Naive thymus-derived CD8-positive, alpha-beta T cell (primary cell): ENCODE measurements at regions of chr18 and their contacts with region 1.

Region 1: DNA sequence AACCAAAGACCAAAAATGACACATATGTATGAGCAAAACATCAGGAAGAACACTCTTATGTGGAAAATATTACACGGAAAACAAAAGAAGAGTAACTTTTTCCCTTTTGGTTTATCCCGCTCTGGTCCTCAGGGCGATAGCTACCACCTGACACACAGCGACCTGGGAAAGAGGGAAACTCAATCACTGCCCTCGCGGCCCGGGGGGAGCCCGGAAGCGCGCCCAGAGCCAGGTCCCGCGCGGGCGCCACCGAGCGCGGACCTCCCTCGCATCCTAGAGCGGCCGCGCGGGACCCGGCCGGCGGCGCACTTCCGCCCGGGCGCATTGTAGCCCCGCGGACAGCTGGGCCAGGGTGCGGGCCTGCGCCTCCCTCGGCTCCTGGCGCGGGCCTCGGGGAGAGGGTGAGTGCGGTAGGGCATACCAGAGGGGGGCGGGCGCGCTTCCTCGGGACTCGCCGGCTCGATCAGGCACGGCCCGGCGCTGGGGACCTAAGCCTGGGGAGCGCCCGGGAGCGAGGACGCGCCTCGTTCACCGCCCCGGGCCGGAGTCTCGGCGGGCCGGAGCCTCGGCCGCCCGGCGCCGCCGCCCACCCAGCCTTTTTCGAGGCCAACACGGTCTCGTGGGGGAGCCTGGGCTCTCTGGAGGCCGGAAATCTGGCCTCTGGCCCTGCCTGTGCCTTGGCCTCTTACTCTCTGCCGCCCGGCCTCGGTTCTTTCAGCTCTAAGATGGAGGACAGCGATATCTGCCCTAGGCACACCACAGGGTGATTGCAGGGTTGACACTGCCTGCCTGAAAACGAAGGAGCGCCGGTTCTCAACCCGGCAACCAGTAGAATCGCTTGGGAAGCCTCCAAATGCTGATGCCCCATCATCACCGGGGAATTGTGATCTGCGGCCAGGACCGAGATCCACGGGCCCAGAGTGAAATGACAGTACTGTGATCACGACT is at the start of gene ELAC1:
- DNase-seq: peak; percentile 32 to 75 (median 62)
- ATAC-seq: peak; percentile 87 to 89
- H3K4me3 Mint-ChIP-seq: peak within 1 kb of the TSS; percentile 72 to 97 (median 94)
- H3K27ac Mint-ChIP-seq: peak within 1 kb of the TSS; percentile 61 to 98 (median 96)
- H3K4me1 Mint-ChIP-seq: peaks cover 16 to 32% (median 25%) of the 10 kb centered on the region in 4 donors
- H3K27me3 Mint-ChIP-seq: no peaks in the 10 kb centered on the region
- polyA plus RNA-seq, gene ELAC1: 12.6 to 19.9 (median 15.0) TPM

Region 2: GRCh38 chr18:50878345-50879301 is 89.4 kb before region 1 on chr18 and contains the start of gene ME2:
- POLR2A ChIA-PET with region 1: interaction called, 47 read pairs
- DNase-seq: peak; percentile 77 to 94 (median 88)
- ATAC-seq: peak; percentile 88 to 90
- H3K4me3 Mint-ChIP-seq: peak within 1 kb of the TSS; percentile 91 to 99 (median 98)
- H3K27ac Mint-ChIP-seq: peak within 1 kb of the TSS; percentile 95 to 99 (median 98)
- H3K4me1 Mint-ChIP-seq: peaks cover 14 to 38% (median 32%) of the 10 kb centered on the region in 4 donors
- H3K27me3 Mint-ChIP-seq: peaks cover 0 to 3% (median 0%) of the 10 kb centered on the region in 5 donors
- polyA plus RNA-seq, gene ME2: 39.0 to 52.3 (median 42.0) TPM

Region 3: DNA sequence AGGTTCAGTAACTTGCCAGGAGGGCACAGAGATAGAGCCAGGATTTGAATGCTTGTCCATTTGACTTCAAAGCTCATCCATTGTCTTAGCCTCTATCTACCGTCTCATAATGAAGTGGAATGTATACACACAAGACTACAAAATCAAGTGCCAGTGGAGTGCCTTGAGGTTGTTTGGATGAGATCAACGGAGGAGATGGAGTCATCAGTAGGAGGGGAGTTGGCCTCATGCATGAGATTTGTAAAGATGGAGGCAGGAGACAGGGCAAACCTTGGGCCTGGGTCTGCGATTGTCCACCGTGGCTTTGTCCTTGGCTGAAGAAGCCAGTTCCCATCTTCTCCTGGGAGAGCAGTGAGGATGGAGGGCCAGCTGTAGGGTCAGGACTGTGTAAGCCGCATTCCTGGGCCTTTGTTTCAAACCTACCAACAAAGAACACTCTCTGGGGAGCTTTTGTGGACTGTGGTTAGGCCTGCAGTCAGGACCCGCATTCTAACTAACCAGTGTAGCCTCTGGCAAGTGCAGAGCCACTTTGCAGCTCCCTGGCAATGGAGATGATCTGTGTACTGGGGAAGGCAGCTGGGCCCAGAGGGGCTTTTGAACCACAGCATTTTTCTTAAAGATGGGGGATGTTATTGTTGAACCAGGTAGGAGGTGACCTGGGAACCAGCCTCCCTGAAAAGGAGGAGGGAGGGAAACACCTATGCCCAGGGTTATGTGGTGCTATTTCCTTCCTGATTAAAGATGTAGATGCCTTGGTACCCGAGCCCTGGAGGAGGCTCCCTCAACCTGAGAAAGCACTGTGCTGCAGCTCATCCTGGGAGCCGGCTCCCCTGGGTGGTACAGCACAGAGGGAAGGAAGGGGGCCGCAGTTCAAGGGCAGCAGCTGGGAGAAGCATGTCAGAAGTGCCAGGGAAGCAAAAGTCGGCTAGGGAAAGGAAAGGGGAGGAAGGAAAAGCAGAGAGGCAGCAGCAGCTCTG is 49.2 kb after region 1 on chr18:
- POLR2A ChIA-PET with region 1: no interaction called
- DNase-seq: no peak
- ATAC-seq: no peak
- H3K4me3 Mint-ChIP-seq: no peak overlapping the region
- H3K27ac Mint-ChIP-seq: peak overlapping the region in 2 of 10 donors; percentile 60 to 72
- H3K4me1 Mint-ChIP-seq: peaks cover 0 to 7% (median 1%) of the 10 kb centered on the region in 4 donors
- H3K27me3 Mint-ChIP-seq: no peaks in the 10 kb centered on the region